ENCODE measurements at regions of chr12 and their contacts with region 1.

Region 1: GRCh38 chr12:124767066-124767821 is 96.4 kb downstream of the SCARB1 start:
- DNase-seq: peak; percentile 95
- H3K4me3 ChIP-seq: no peak overlapping the region
- H3K27ac ChIP-seq: peak overlapping the region; percentile 80 to 89 (median 88)
- H3K4me1 ChIP-seq: peaks cover 41 to 54% (median 51%) of the 10 kb centered on the region in 4 donors
- H3K27me3 ChIP-seq: peaks cover 0 to under 1% (median 0%) of the 10 kb centered on the region in 4 donors
- CTCF ChIP-seq: peak in 2 of 3 experiments; percentile 99 to 100
- EP300 ChIP-seq: no peak
- POLR2A ChIP-seq: no peak

Region 2: GRCh38 chr12:124036674-124037109 is 730.6 kb before region 1 on chr12:
- intact Hi-C with region 1: loop called (anchors 5 kb)
- DNase-seq: no peak
- H3K4me3 ChIP-seq: no peak overlapping the region
- H3K27ac ChIP-seq: no peak overlapping the region
- H3K4me1 ChIP-seq: peaks cover 0 to 5% (median 0%) of the 10 kb centered on the region in 4 donors
- H3K27me3 ChIP-seq: no peaks in the 10 kb centered on the region
- CTCF ChIP-seq: peak; percentile 91 to 94 (median 93)
- EP300 ChIP-seq: no peak
- POLR2A ChIP-seq: no peak

Region 3: GRCh38 chr12:124327362-124328043 is 439.7 kb before region 1 on chr12:
- intact Hi-C with region 1: loop called (anchors 5 kb)
- DNase-seq: no peak
- H3K4me3 ChIP-seq: no peak overlapping the region
- H3K27ac ChIP-seq: peak overlapping the region; percentile 34 to 74 (median 60)
- H3K4me1 ChIP-seq: peaks cover 20 to 26% (median 22%) of the 10 kb centered on the region in 4 donors
- H3K27me3 ChIP-seq: no peaks in the 10 kb centered on the region
- CTCF ChIP-seq: no peak
- EP300 ChIP-seq: no peak
- POLR2A ChIP-seq: no peak

Region 4: DNA sequence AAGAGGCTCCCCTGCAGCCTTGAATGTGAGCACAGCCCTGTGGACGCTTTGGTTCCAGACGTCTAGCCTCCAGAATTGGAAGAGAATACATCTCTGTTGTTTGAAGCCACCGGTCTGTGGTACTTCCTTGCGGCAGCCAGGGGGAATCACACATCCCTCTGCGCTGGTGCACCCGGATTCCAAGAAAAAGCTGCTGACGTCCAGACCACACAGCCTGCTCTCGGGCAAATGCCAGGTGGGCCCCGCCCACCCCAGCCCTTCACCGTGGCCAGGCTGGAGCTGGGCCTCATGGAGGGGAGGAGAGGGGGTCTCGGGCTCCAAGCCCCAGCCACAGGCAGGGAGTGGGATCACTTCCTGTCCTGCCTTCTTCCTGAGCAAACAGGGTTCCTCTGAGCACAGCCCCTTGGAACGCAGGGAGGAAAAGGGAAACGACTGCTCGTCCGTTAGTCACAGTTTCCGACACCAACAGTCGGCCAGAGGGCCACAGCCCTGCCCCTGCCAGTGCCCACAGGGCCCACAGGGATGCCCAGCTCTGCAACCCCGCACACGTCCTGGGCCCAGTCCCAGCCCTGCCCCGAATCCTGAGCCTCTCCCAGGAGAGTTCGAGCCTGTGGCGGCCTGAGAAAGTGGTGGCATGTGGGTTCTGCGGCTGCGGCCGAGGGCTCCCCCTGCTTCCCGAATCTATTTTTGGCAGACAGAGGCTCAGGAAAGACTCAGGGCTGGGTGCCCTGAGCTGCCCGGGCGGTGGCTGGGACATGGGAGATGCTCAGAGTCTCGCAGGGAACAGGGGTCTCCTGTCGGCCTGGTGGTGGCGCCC is 387.1 kb before region 1 on chr12:
- intact Hi-C with region 1: loop called (anchors 5 kb)
- DNase-seq: no peak
- H3K4me3 ChIP-seq: peak overlapping the region in 1 of 4 donors; percentile 24
- H3K27ac ChIP-seq: peak overlapping the region; percentile 92 to 97 (median 95)
- H3K4me1 ChIP-seq: peaks cover 54 to 71% (median 65%) of the 10 kb centered on the region in 4 donors
- H3K27me3 ChIP-seq: no peaks in the 10 kb centered on the region
- CTCF ChIP-seq: peak; percentile 64 to 71 (median 66)
- EP300 ChIP-seq: no peak
- POLR2A ChIP-seq: no peak

Region 5: GRCh38 chr12:124567661-124568373 is 199.4 kb before region 1 on chr12:
- intact Hi-C with region 1: loop called (anchors 1 kb)
- DNase-seq: peak; percentile 98
- H3K4me3 ChIP-seq: peak overlapping the region; percentile 79 to 96 (median 88)
- H3K27ac ChIP-seq: peak overlapping the region; percentile 92 to 99 (median 95)
- H3K4me1 ChIP-seq: peaks cover 48 to 59% (median 53%) of the 10 kb centered on the region in 4 donors
- H3K27me3 ChIP-seq: no peaks in the 10 kb centered on the region
- CTCF ChIP-seq: peak in 2 of 3 experiments; percentile 7 to 31
- EP300 ChIP-seq: peak; percentile 48
- POLR2A ChIP-seq: no peak

Measured in esophagus muscularis mucosa (tissue), 4 donors.